B cell (primary cell): ENCODE measurements at regions of chr2 and their contacts with region 1.

Region 1: GRCh38 chr2:47386551-47386950 is 16.4 kb upstream of the MSH2 start:
- DNase-seq: no peak
- ATAC-seq: no peak
- H3K4me3 ChIP-seq: no peak overlapping the region
- H3K4me3 Mint-ChIP-seq: no peak overlapping the region
- H3K27ac ChIP-seq: no peak overlapping the region
- H3K27ac Mint-ChIP-seq: no peak overlapping the region
- H3K4me1 ChIP-seq: no peaks in the 10 kb centered on the region
- H3K4me1 Mint-ChIP-seq: no peaks in the 10 kb centered on the region
- H3K27me3 ChIP-seq: no peaks in the 10 kb centered on the region
- H3K27me3 Mint-ChIP-seq: peaks cover 4% of the 10 kb centered on the region
- CTCF ChIP-seq: no peak

Region 2: GRCh38 chr2:47339745-47340541 is 46.6 kb before region 1 on chr2:
- CTCF ChIA-PET with region 1: interaction called, 134 read pairs
- POLR2A ChIA-PET with region 1: interaction called, 6 read pairs
- intact Hi-C with region 1: no loop called
- DNase-seq: no peak
- ATAC-seq: no peak
- H3K4me3 ChIP-seq: no peak overlapping the region
- H3K4me3 Mint-ChIP-seq: no peak overlapping the region
- H3K27ac ChIP-seq: no peak overlapping the region
- H3K27ac Mint-ChIP-seq: no peak overlapping the region
- H3K4me1 ChIP-seq: peaks cover 21 to 26% of the 10 kb centered on the region in 2 donors
- H3K4me1 Mint-ChIP-seq: peaks cover 30% of the 10 kb centered on the region
- H3K27me3 ChIP-seq: peaks cover 0 to 7% (median 1%) of the 10 kb centered on the region in 4 experiments
- H3K27me3 Mint-ChIP-seq: peaks cover 8% of the 10 kb centered on the region
- CTCF ChIP-seq: no peak

Region 3: DNA sequence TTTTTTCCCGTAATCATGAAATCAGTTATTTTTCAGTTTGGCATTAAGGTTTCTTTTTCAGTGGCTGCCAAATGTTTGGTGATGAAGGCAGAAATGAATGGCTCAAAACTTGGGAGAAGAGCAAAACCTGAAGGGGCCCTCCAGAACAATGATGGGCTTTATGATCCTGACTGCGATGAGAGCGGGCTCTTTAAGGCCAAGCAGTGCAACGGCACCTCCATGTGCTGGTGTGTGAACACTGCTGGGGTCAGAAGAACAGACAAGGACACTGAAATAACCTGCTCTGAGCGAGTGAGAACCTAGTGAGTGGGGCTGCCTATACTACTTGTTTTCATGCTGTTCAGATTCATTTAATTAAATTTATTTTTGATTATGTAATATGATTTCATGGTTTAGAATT is 12.8 kb before region 1 on chr2:
- CTCF ChIA-PET with region 1: interaction called, 12 read pairs
- POLR2A ChIA-PET with region 1: no interaction called
- intact Hi-C with region 1: no loop called
- DNase-seq: no peak
- ATAC-seq: no peak
- H3K4me3 ChIP-seq: no peak overlapping the region
- H3K4me3 Mint-ChIP-seq: no peak overlapping the region
- H3K27ac ChIP-seq: no peak overlapping the region
- H3K27ac Mint-ChIP-seq: no peak overlapping the region
- H3K4me1 ChIP-seq: peaks cover 10 to 11% of the 10 kb centered on the region in 2 donors
- H3K4me1 Mint-ChIP-seq: peaks cover 3% of the 10 kb centered on the region
- H3K27me3 ChIP-seq: peaks cover 0 to 13% (median 4%) of the 10 kb centered on the region in 4 experiments
- H3K27me3 Mint-ChIP-seq: peaks cover 6% of the 10 kb centered on the region
- CTCF ChIP-seq: no peak